ENCODE measurements at regions of chr2 and their contacts with region 1.

Region 1: DNA sequence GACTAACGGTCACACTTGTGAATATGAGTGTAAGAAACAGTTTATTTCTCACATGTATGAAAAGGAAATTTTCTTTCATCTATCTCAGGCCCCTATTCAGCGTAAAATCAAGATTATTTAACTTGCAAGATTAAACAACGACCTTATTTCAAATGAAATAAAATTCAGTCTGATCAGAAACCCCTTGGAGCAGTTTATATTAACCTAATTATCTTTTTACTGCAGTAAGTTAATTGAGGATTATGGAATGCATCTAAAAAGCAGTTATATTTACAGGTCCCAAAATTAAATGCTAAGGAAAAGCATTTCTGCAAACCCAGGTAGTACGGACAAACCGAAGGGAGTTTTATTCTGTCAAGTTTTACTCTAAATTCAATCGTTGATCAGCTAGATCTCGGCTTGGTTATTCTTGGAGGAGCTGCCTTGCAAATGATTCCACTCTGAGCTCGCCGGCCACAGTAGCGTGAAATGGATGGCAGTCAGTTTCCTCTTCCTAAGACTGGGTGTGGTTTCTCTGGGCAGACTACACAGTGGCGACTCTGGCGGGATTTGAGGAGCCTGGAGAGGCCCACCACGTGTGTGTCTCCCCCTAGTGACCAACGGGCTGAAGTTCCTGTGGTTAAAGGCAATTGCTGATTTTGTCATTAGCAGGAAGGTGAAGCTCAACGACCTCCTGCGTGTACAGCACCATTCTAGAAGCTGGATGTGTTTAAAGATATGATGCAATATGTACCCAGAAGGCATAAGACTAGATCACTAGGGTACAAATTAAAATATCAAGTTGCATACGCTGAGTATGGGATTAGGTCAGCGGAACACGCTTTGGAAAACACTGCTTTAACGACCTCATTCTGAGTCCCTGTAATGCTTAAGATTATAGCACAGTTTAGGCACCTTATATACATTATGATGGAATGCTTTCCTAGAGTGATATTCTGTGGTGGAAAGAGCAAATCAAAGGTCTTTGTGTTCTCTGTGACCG is 36.4 kb downstream of the PRKRA start:
- DNase-seq: peak; percentile 90
- ATAC-seq: peak; percentile 80
- H3K4me3 Mint-ChIP-seq: peak overlapping the region; percentile 79
- H3K27ac Mint-ChIP-seq: peak overlapping the region; percentile 89
- H3K4me1 Mint-ChIP-seq: peaks cover 30% of the 10 kb centered on the region
- H3K27me3 Mint-ChIP-seq: peaks cover 4% of the 10 kb centered on the region

Region 2: GRCh38 chr2:178112202-178113152 is 302.1 kb before region 1 on chr2 and contains the start of gene RBM45:
- CTCF ChIA-PET with region 1: interaction called, 36 read pairs
- POLR2A ChIA-PET with region 1: interaction called, 6 read pairs
- DNase-seq: peak; percentile 89
- ATAC-seq: peak; percentile 95
- H3K4me3 Mint-ChIP-seq: peak within 1 kb of the TSS; percentile 95
- H3K27ac Mint-ChIP-seq: peak within 1 kb of the TSS; percentile 91
- H3K4me1 Mint-ChIP-seq: peaks cover 31% of the 10 kb centered on the region
- H3K27me3 Mint-ChIP-seq: no peaks in the 10 kb centered on the region
- total RNA-seq, gene RBM45: 16.9 to 18.0 TPM

Region 3: GRCh38 chr2:178386986-178387597 is 27.5 kb before region 1 on chr2:
- CTCF ChIA-PET with region 1: interaction called, 179 read pairs
- POLR2A ChIA-PET with region 1: interaction called, 4 read pairs
- DNase-seq: no peak
- ATAC-seq: no peak
- H3K4me3 Mint-ChIP-seq: no peak overlapping the region
- H3K27ac Mint-ChIP-seq: no peak overlapping the region
- H3K4me1 Mint-ChIP-seq: peaks cover 6% of the 10 kb centered on the region
- H3K27me3 Mint-ChIP-seq: peaks cover 10% of the 10 kb centered on the region

Region 4: GRCh38 chr2:178404368-178404767 is 10.2 kb before region 1 on chr2:
- CTCF ChIA-PET with region 1: interaction called, 179 read pairs
- POLR2A ChIA-PET with region 1: interaction called, 55 read pairs
- DNase-seq: peak; percentile 44
- ATAC-seq: peak; percentile 84
- H3K4me3 Mint-ChIP-seq: peak overlapping the region; percentile 34
- H3K27ac Mint-ChIP-seq: peak overlapping the region; percentile 84
- H3K4me1 Mint-ChIP-seq: peaks cover 18% of the 10 kb centered on the region
- H3K27me3 Mint-ChIP-seq: peaks cover 11% of the 10 kb centered on the region

Region 5: GRCh38 chr2:178450774-178451525 is 36.4 kb after region 1 on chr2 and contains the starts of genes PJVK and PRKRA:
- CTCF ChIA-PET with region 1: interaction called, 83 read pairs
- POLR2A ChIA-PET with region 1: interaction called, 32 read pairs
- DNase-seq: peak; percentile 96
- ATAC-seq: peak; percentile 92
- H3K4me3 Mint-ChIP-seq: peak within 1 kb of the TSS; percentile 88
- H3K27ac Mint-ChIP-seq: peak within 1 kb of the TSS; percentile 93
- H3K4me1 Mint-ChIP-seq: peaks cover 30% of the 10 kb centered on the region
- H3K27me3 Mint-ChIP-seq: peaks cover 3% of the 10 kb centered on the region
- total RNA-seq, gene PJVK: 0.50 to 0.99 TPM
- total RNA-seq, gene PRKRA: 41.2 to 41.8 TPM